ENCODE measurements at regions of chr11 and their contacts with region 1.

Region 1: DNA sequence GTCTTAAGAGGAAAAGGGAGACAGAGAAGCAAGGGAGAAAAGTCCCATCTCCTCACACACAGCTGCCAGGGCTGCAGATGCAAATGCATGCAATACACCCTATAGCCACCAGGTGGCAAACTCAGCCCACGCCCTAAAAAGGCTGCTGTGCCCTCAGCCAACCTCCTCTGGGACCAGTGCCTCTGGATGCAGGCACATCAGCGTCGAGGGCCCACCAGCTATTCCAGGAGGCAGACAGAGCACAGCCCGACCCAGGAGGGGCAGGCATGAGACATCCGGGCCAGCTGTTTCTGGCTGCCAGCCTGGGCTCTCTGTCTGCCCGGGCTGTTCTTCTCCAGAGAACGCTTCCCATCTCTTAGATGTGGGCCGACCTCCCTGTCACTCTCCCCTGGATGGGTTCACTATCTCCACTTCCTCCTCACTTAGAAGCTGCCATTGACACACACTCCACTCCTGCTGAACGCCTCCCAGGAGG is 39.7 kb downstream of the TPBGL start:
- DNase-seq: peak; percentile 95
- H3K4me3 ChIP-seq: peak overlapping the region in 1 of 2 experiments; percentile 18; a peak in 1 of 4 replicates
- H3K27ac ChIP-seq: peak overlapping the region in 1 of 2 experiments; percentile 62; a peak in 2 of 4 replicates
- H3K4me1 ChIP-seq: peaks cover 0 to 19% of the 10 kb centered on the region in 2 experiments; a peak in 1 of 4 replicates
- H3K27me3 ChIP-seq: no peaks in the 10 kb centered on the region
- CTCF ChIP-seq: peak; percentile 89
- EP300 ChIP-seq: no peak
- RAD21 ChIP-seq: peak; percentile 99

Region 2: GRCh38 chr11:75160192-75160757 is 120.0 kb before region 1 on chr11:
- CTCF ChIA-PET with region 1: no interaction called
- POLR2A ChIA-PET with region 1: no interaction called
- DNase-seq: no peak
- H3K4me3 ChIP-seq: no peak overlapping the region
- H3K27ac ChIP-seq: no peak overlapping the region
- H3K4me1 ChIP-seq: no peaks in the 10 kb centered on the region; a peak in 1 of 4 replicates
- H3K27me3 ChIP-seq: peaks cover 6% of the 10 kb centered on the region; the same call in 1 of the 2 replicates
- CTCF ChIP-seq: no peak
- EP300 ChIP-seq: no peak
- RAD21 ChIP-seq: no peak

Region 3: DNA sequence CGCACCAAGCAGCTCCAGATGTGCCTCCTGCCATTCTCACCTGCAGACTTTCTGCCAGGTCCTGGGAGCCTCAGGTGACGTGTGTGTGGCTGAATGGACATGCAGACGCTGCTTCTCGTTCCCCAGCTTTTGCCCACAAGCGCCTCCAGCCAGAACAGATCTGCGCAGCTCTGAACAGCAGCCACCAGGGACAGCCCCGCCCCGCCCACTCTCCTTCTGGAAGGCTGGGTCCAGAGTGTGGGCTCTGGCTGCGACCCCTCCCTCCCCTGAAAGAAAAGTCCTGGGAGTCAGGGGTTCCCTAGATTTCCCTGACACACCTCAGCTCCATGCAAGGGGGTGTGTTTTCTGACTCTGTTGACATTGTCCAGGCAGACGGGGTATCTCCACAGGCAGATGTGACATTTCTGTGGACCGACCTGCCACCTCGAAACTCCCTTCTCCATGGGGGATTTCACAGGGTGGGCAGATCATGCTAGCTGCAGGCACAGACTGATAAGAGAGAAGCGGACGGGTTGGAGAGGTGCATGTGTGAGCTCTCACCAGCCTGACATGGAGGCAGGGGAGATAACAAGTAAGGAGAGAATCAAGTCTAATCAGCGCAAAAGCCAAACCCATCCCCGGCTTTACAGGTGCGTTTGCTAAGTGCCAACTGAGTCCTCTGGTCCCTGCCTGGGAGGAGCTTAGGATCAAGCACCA is 109.6 kb before region 1 on chr11:
- CTCF ChIA-PET with region 1: no interaction called
- POLR2A ChIA-PET with region 1: no interaction called
- DNase-seq: no peak
- H3K4me3 ChIP-seq: no peak overlapping the region
- H3K27ac ChIP-seq: no peak overlapping the region
- H3K4me1 ChIP-seq: no peaks in the 10 kb centered on the region; a peak in 1 of 4 replicates
- H3K27me3 ChIP-seq: peaks cover 8% of the 10 kb centered on the region; the same call in 1 of the 2 replicates
- CTCF ChIP-seq: no peak
- EP300 ChIP-seq: no peak
- RAD21 ChIP-seq: no peak

Region 4: GRCh38 chr11:75293903-75294302 is 13.6 kb after region 1 on chr11:
- CTCF ChIA-PET with region 1: interaction called, 25 read pairs
- POLR2A ChIA-PET with region 1: interaction called, 3 read pairs
- DNase-seq: no peak
- H3K4me3 ChIP-seq: no peak overlapping the region
- H3K27ac ChIP-seq: no peak overlapping the region
- H3K4me1 ChIP-seq: no peaks in the 10 kb centered on the region; a peak in 1 of 4 replicates
- H3K27me3 ChIP-seq: no peaks in the 10 kb centered on the region
- CTCF ChIP-seq: no peak
- EP300 ChIP-seq: no peak
- RAD21 ChIP-seq: no peak

Region 5: GRCh38 chr11:75308118-75308517 is 27.9 kb after region 1 on chr11:
- CTCF ChIA-PET with region 1: interaction called, 30 read pairs
- POLR2A ChIA-PET with region 1: no interaction called
- DNase-seq: no peak
- H3K4me3 ChIP-seq: no peak overlapping the region
- H3K27ac ChIP-seq: no peak overlapping the region
- H3K4me1 ChIP-seq: peaks cover 0 to 30% of the 10 kb centered on the region in 2 experiments; a peak in 2 of 4 replicates
- H3K27me3 ChIP-seq: no peaks in the 10 kb centered on the region
- CTCF ChIP-seq: no peak
- EP300 ChIP-seq: no peak
- RAD21 ChIP-seq: no peak

Region 6: DNA sequence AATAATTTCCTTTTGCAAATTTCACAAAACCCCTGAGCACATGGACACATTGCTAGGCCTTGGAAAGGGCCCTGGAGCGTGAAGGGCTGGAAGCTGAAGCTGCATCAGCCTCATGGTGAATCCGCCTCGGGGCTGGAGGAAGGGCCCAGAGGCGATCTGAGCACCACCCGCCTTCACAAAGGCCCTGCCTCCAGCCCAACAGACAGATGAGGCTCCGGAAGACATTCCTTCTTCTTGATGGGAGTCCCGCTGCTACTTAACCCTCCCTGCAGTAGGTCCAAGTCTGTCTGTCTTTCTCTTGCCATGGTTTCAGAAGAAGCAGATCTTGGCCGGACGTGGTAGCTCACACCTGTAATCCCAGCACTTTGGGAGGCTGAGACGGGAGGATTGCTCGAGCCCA is 54.7 kb after region 1 on chr11:
- CTCF ChIA-PET with region 1: interaction called, 46 read pairs
- POLR2A ChIA-PET with region 1: no interaction called
- DNase-seq: no peak
- H3K4me3 ChIP-seq: no peak overlapping the region
- H3K27ac ChIP-seq: no peak overlapping the region
- H3K4me1 ChIP-seq: peaks cover 33 to 58% of the 10 kb centered on the region in 2 experiments
- H3K27me3 ChIP-seq: no peaks in the 10 kb centered on the region
- CTCF ChIP-seq: no peak
- EP300 ChIP-seq: no peak
- RAD21 ChIP-seq: no peak

Region 7: GRCh38 chr11:75351791-75352587 is 71.7 kb after region 1 on chr11:
- CTCF ChIA-PET with region 1: interaction called, 24 read pairs
- POLR2A ChIA-PET with region 1: interaction called, 4 read pairs
- DNase-seq: peak; percentile 92
- H3K4me3 ChIP-seq: peak overlapping the region; percentile 64 to 73
- H3K27ac ChIP-seq: peak overlapping the region in 1 of 2 experiments; percentile 96; a peak in 2 of 4 replicates
- H3K4me1 ChIP-seq: peaks cover 23 to 48% of the 10 kb centered on the region in 2 experiments; a peak in 3 of 4 replicates
- H3K27me3 ChIP-seq: no peaks in the 10 kb centered on the region
- CTCF ChIP-seq: no peak
- EP300 ChIP-seq: no peak
- RAD21 ChIP-seq: peak; percentile 35

Region 8: GRCh38 chr11:75406338-75406777 is 126.1 kb after region 1 on chr11:
- CTCF ChIA-PET with region 1: interaction called, 13 read pairs
- POLR2A ChIA-PET with region 1: no interaction called
- DNase-seq: peak; percentile 61
- H3K4me3 ChIP-seq: no peak overlapping the region
- H3K27ac ChIP-seq: peak overlapping the region; percentile 3 to 74; a peak in 3 of 4 replicates
- H3K4me1 ChIP-seq: peaks cover 22 to 43% of the 10 kb centered on the region in 2 experiments
- H3K27me3 ChIP-seq: no peaks in the 10 kb centered on the region
- CTCF ChIP-seq: no peak
- EP300 ChIP-seq: peak in 1 of 2 experiments; percentile 57; a peak in 1 of 4 replicates
- RAD21 ChIP-seq: no peak